ENCODE measurements at regions of chr2 and their contacts with region 1.

Region 1: GRCh38 chr2:132400169-132400900 is 16.3 kb upstream of the GPR39 start:
- DNase-seq: peak; percentile 70
- ATAC-seq: peak; percentile 77
- H3K4me3 ChIP-seq: no peak overlapping the region
- H3K27ac ChIP-seq: no peak overlapping the region
- H3K4me1 ChIP-seq: peaks cover 8% of the 10 kb centered on the region
- H3K27me3 ChIP-seq: no peaks in the 10 kb centered on the region
- CTCF ChIP-seq: peak; percentile 43

Region 2: DNA sequence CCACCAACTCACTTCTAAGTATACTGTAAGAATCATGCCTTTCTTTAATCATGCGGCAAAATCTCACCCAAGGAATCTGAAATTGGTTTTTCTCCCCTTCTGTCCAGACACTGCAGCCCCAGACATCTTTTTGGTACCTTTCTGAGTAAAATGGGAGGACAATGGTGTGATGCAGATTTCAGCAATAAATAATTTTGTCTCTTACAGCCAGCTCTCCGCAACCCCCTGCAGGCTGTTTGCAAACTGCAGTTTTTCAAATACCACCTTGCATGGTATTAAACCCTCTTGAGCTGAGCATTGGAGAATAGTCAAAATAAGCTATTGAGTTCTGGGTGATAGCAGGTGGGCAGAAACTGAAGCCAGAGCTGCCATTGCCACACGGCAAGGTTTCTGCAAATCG is 48.4 kb after region 1 on chr2:
- CTCF ChIA-PET with region 1: no interaction called
- POLR2A ChIA-PET with region 1: no interaction called
- intact Hi-C with region 1: loop called (anchors 1 kb)
- DNase-seq: peak; percentile 66
- ATAC-seq: peak; percentile 72
- H3K4me3 ChIP-seq: no peak overlapping the region
- H3K27ac ChIP-seq: no peak overlapping the region
- H3K4me1 ChIP-seq: peaks cover 8% of the 10 kb centered on the region; the same call in 1 of the 2 replicates
- H3K27me3 ChIP-seq: no peaks in the 10 kb centered on the region
- CTCF ChIP-seq: peak; percentile 89